ENCODE measurements at regions of chr4 and their contacts with region 1.

Region 1: GRCh38 chr4:82721819-82722423 is 76.7 kb downstream of the SCD5 start:
- DNase-seq: peak; percentile 16
- H3K4me3 ChIP-seq: no peak overlapping the region
- H3K27ac ChIP-seq: no peak overlapping the region
- H3K4me1 ChIP-seq: no peaks in the 10 kb centered on the region
- H3K27me3 ChIP-seq: no peaks in the 10 kb centered on the region
- CTCF ChIP-seq: peak; percentile 52

Region 2: DNA sequence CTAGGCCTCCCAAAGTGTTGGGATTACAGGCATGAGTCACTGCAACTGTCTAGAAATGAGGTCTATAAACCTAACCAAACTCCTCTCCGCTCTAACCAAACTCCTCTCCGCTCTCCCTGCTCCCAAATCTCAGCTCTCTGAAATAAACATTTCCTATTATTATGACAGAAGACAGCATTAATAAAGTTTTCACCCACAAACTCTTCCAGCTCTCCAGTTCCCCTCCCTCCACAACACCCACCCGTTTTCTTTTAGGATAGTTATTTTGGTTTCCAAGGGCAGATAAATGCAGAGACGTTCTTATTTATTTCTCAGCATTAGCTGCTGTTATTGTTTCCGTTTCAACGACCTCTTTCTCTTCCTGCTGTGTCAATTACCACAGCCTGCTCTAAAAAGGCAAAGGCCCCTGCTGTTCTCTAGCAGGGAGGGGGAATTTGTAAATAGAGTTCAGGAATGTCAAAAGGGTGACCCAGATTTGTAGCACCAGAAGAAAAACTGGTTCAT is 90.0 kb after region 1 on chr4:
- CTCF ChIA-PET with region 1: no interaction called
- POLR2A ChIA-PET with region 1: no interaction called
- intact Hi-C with region 1: loop called (anchors 10 kb)
- DNase-seq: peak; percentile 90
- H3K4me3 ChIP-seq: no peak overlapping the region
- H3K27ac ChIP-seq: no peak overlapping the region
- H3K4me1 ChIP-seq: peaks cover 32% of the 10 kb centered on the region
- H3K27me3 ChIP-seq: no peaks in the 10 kb centered on the region
- CTCF ChIP-seq: no peak